Mammary epithelial cell (primary cell): ENCODE measurements at regions of chr4 and their contacts with region 1.

Region 1: DNA sequence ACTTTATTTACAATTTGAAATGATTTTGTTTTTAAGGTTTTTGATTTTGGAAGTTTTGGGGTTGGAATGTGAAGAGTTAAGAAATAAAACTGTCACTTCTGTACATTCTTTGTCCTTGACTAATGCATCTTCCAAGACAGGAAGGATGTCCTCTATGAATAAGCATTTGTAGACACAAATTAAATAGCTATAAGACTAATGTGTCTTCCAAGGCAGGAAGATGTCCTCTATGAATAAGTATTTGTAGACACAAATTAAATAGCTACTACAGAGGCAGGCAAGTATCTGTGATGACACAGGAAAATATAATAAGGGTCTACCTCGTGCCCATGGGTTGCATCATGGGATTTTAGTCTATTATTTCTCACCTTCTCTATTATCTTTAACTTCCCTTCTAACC is 14.5 kb downstream of the PRSS48 start:
- DNase-seq: no peak
- H3K4me3 ChIP-seq: no peak overlapping the region
- H3K27ac ChIP-seq: no peak overlapping the region
- H3K4me1 ChIP-seq: peaks cover 11% of the 10 kb centered on the region
- H3K27me3 ChIP-seq: no peaks in the 10 kb centered on the region
- CTCF ChIP-seq: no peak

Region 2: DNA sequence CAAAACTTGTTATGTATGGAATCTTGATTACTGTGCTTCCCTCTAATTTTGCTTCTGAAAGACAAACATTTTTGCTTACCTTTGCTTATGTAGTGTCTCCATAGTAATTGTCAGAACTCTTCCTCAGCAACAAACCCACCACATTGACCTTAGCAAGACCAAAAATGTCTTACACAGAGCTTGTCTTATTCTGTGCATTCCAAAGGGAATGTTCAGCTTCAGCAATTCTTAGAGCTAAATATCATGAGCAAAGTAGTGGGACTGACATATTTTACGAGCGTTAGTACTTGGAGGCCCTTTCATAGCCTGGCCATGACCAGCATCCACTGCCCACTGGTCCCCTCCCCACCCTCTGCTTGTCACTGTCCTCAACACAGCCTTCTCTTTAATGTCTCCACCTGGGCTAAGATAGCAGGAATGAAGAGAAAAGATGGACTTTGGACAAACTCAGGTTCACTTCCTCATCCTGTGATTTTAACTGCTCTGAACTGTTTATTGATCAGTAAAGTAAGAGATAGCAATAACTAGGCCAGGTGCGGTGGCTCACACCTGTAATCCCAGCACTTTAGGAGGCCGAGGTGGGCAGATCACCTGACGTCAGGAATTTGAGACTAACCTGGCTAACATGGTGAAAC is 49.4 kb after region 1 on chr4:
- CTCF ChIA-PET with region 1: no interaction called
- dilution Hi-C with region 1: loop called (anchors 10 kb)
- in situ Hi-C with region 1: no loop called
- intact Hi-C with region 1: no loop called
- DNase-seq: no peak
- H3K4me3 ChIP-seq: no peak overlapping the region
- H3K27ac ChIP-seq: no peak overlapping the region
- H3K4me1 ChIP-seq: no peaks in the 10 kb centered on the region
- H3K27me3 ChIP-seq: no peaks in the 10 kb centered on the region
- CTCF ChIP-seq: no peak